B cell (primary cell): ENCODE measurements at regions of chr6 and their contacts with region 1.

Region 1: DNA sequence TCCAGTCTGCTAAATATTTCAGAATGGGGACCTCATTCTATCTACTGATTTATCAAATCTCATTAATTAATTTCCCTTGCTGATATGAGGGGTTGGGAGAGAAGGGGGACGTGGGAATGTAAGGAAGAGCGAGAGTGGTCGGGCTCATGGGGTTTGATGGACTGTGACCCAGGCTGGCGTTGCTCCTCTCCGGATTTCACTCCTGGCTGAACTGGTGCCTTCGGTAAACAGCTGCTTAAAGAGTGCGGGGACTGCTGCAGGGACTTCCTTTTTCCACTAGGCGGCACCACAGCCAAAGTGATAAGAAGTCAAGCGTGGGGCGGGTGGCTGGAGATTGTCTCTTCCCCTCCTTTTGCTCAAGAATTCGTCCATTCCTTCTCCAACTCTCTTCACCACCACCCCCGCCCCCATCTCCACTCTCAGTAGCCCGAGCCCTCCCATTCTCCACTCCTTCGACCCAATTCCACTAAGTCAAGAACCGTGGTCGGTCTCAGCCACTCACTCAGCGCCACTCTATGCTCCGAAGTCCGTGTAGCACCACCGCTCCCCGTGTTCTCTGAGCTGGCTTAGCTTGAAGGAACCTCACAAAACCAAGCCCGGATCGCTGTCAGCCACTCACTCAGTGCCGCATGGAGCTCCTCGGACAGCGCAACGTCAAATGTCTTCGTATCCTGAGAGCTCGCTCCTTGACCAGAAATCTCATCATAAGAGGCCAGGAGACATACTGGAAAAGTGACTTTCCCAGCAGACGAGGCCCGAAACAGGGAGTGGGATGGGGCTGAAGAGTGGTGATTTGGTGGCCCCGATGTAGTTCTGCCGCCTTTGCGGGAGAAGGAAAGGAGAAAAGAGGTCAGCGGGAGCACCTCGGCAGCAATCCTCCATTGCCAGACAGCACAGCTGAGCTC is 9.7 kb downstream of the TRIM31 start:
- DNase-seq: peak; percentile 92
- ATAC-seq: peak; percentile 82
- H3K4me3 ChIP-seq: peak overlapping the region in 4 of 5 experiments; percentile 44 to 64 (median 54)
- H3K4me3 Mint-ChIP-seq: peak overlapping the region; percentile 91
- H3K27ac ChIP-seq: peak overlapping the region in 1 of 2 donors; percentile 22
- H3K27ac Mint-ChIP-seq: peak overlapping the region; percentile 59
- H3K4me1 ChIP-seq: peaks cover 37 to 40% of the 10 kb centered on the region in 2 donors
- H3K4me1 Mint-ChIP-seq: peaks cover 32% of the 10 kb centered on the region
- H3K27me3 ChIP-seq: peaks cover 3 to 65% (median 51%) of the 10 kb centered on the region in 4 experiments
- H3K27me3 Mint-ChIP-seq: peaks cover 52% of the 10 kb centered on the region
- CTCF ChIP-seq: peak; percentile 92

Region 2: GRCh38 chr6:29847871-29848630 is 255.2 kb before region 1 on chr6:
- CTCF ChIA-PET with region 1: interaction called, 14 read pairs
- POLR2A ChIA-PET with region 1: no interaction called
- intact Hi-C with region 1: no loop called
- DNase-seq: peak; percentile 85
- ATAC-seq: peak; percentile 85
- H3K4me3 ChIP-seq: no peak overlapping the region
- H3K4me3 Mint-ChIP-seq: no peak overlapping the region
- H3K27ac ChIP-seq: no peak overlapping the region
- H3K27ac Mint-ChIP-seq: no peak overlapping the region
- H3K4me1 ChIP-seq: peaks cover 6 to 11% of the 10 kb centered on the region in 2 donors
- H3K4me1 Mint-ChIP-seq: peaks cover 9% of the 10 kb centered on the region
- H3K27me3 ChIP-seq: peaks cover 0 to 63% (median 45%) of the 10 kb centered on the region in 4 experiments
- H3K27me3 Mint-ChIP-seq: peaks cover 66% of the 10 kb centered on the region
- CTCF ChIP-seq: peak; percentile 92

Region 3: DNA sequence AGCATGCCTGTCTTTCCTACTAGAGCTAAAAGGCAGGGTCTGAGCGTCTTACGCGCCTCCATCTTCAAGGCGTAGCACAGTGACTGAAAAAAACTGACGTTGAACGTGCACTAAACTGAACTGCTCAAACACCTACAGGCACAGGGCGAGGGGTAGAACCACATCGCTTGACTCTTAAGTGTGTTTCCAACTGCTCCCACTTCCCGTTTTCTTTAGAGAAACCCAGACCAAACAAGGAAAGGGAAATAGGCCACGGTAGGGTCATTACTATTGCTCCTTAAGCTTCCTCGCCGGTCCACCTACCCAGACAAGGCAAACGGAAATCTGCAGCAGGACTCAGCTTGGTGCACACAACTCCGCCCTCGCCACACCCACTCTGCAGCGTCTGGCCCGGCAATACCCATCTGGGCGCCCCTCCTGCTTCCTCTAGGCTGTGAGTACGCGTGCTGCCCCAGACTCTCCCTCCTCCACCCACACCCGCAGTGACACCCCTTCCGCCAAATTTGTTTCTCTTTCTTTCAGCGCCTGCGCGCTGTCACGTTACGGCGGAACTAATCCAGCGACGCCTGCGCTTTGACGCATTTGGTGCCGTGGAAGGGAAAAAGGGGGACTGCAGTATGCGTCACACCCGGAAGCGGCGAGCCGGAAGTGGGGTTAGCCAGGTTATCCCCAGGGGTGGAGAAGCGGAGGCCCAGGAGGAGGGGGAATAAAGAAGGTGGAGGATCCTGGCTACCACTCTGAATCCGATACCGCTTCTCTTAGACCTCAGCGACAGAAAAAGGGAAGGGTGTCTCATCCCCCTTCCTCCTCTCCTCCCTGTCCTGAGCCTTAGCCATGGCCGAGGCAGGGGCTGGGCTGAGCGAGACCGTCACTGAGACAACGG is 36.4 kb before region 1 on chr6 and contains the start of gene PPP1R11:
- CTCF ChIA-PET with region 1: interaction called, 10 read pairs
- POLR2A ChIA-PET with region 1: interaction called, 10 read pairs
- intact Hi-C with region 1: loop called (anchors 1 kb)
- DNase-seq: peak; percentile 100
- ATAC-seq: peak; percentile 97
- H3K4me3 ChIP-seq: peak within 1 kb of the TSS; percentile 80 to 95 (median 85)
- H3K4me3 Mint-ChIP-seq: peak within 1 kb of the TSS; percentile 93
- H3K27ac ChIP-seq: peak within 1 kb of the TSS; percentile 93 to 97
- H3K27ac Mint-ChIP-seq: peak within 1 kb of the TSS; percentile 99
- H3K4me1 ChIP-seq: peaks cover 42 to 45% of the 10 kb centered on the region in 2 donors
- H3K4me1 Mint-ChIP-seq: peaks cover 51% of the 10 kb centered on the region
- H3K27me3 ChIP-seq: peaks cover 0 to 20% (median 9%) of the 10 kb centered on the region in 4 experiments
- H3K27me3 Mint-ChIP-seq: peaks cover 17% of the 10 kb centered on the region
- CTCF ChIP-seq: no peak
- total RNA-seq, gene PPP1R11: 44.8 and 49.5 TPM in 2 replicates

Region 4: GRCh38 chr6:30077218-30077617 is 26.0 kb before region 1 on chr6:
- CTCF ChIA-PET with region 1: no interaction called
- POLR2A ChIA-PET with region 1: no interaction called
- intact Hi-C with region 1: no loop called
- DNase-seq: no peak
- ATAC-seq: no peak
- H3K4me3 ChIP-seq: no peak overlapping the region
- H3K4me3 Mint-ChIP-seq: no peak overlapping the region
- H3K27ac ChIP-seq: no peak overlapping the region
- H3K27ac Mint-ChIP-seq: no peak overlapping the region
- H3K4me1 ChIP-seq: peaks cover 19 to 20% of the 10 kb centered on the region in 2 donors
- H3K4me1 Mint-ChIP-seq: peaks cover 19% of the 10 kb centered on the region
- H3K27me3 ChIP-seq: peaks cover 0 to 57% (median 40%) of the 10 kb centered on the region in 4 experiments
- H3K27me3 Mint-ChIP-seq: peaks cover 70% of the 10 kb centered on the region
- CTCF ChIP-seq: no peak

Region 5: DNA sequence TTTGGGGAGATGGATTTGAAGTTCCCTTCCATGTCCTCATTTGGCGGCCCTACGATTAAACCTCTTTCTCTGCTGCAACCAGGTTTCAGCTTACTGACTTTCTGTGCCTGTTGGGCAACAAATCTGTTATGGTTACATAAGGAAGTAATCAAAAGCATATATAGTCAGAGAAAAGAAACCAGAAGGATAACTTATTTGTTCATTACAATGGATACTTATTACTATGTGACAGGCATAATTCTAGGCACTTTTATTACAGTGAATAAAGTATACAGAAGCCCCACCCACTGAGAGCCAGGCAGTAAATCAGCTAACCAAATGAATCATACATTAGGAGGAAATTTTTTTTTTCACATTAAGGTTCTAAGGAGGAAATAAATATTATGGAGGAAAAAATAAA is 19.3 kb after region 1 on chr6:
- CTCF ChIA-PET with region 1: interaction called, 22 read pairs
- POLR2A ChIA-PET with region 1: no interaction called
- intact Hi-C with region 1: no loop called
- DNase-seq: no peak
- ATAC-seq: no peak
- H3K4me3 ChIP-seq: no peak overlapping the region
- H3K4me3 Mint-ChIP-seq: no peak overlapping the region
- H3K27ac ChIP-seq: no peak overlapping the region
- H3K27ac Mint-ChIP-seq: no peak overlapping the region
- H3K4me1 ChIP-seq: peaks cover 2% of the 10 kb centered on the region in 2 donors
- H3K4me1 Mint-ChIP-seq: peaks cover 4% of the 10 kb centered on the region
- H3K27me3 ChIP-seq: peaks cover 0 to 19% (median 7%) of the 10 kb centered on the region in 4 experiments
- H3K27me3 Mint-ChIP-seq: peaks cover 47% of the 10 kb centered on the region
- CTCF ChIP-seq: no peak

Region 6: DNA sequence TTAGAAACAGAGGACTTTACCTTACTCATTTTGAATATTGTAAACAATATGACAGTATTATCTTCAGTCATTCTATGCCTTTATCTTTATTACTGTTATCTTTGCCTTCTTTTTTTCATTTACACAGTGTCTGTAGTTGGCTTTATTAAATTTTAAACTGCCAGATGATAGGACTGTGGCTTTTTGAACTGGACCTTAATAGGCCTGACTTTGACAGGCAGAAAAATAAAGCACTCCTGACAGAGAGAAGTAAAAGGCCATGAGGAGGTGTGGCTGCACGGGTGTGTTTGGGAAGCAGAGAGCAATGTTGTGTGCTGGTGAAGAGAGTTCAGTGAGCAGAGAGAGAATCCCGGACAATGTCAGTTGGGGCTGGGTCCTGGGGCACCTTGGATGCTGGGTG is 40.6 kb after region 1 on chr6:
- CTCF ChIA-PET with region 1: interaction called, 12 read pairs
- POLR2A ChIA-PET with region 1: no interaction called
- intact Hi-C with region 1: no loop called
- DNase-seq: no peak
- ATAC-seq: no peak
- H3K4me3 ChIP-seq: no peak overlapping the region
- H3K4me3 Mint-ChIP-seq: no peak overlapping the region
- H3K27ac ChIP-seq: no peak overlapping the region
- H3K27ac Mint-ChIP-seq: no peak overlapping the region
- H3K4me1 ChIP-seq: no peaks in the 10 kb centered on the region
- H3K4me1 Mint-ChIP-seq: no peaks in the 10 kb centered on the region
- H3K27me3 ChIP-seq: peaks cover 0 to 30% (median 7%) of the 10 kb centered on the region in 4 experiments
- H3K27me3 Mint-ChIP-seq: peaks cover 46% of the 10 kb centered on the region
- CTCF ChIP-seq: no peak

Region 7: DNA sequence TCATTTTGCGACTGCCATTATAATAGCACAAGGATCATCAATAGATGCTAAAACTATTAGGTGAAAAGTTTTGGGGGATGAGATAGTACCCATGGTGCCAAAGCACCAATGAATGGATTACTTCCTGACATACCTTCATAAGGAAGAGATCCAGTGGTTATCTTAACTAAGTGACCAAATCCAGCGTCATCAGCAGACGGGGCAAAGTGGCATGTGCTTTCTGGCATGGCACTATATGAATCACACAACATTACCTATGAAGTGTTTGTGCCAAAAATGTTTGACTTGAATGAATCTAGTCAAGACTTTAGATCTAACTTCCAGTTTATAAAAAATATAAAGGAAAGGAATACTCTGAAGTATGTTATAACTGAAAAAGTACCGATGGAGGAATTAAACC is 99.1 kb after region 1 on chr6:
- CTCF ChIA-PET with region 1: no interaction called
- POLR2A ChIA-PET with region 1: no interaction called
- intact Hi-C with region 1: no loop called
- DNase-seq: no peak
- ATAC-seq: no peak
- H3K4me3 ChIP-seq: no peak overlapping the region
- H3K4me3 Mint-ChIP-seq: no peak overlapping the region
- H3K27ac ChIP-seq: peak overlapping the region in 1 of 2 donors; percentile 20
- H3K27ac Mint-ChIP-seq: peak overlapping the region; percentile 61
- H3K4me1 ChIP-seq: peaks cover 36 to 46% of the 10 kb centered on the region in 2 donors
- H3K4me1 Mint-ChIP-seq: peaks cover 53% of the 10 kb centered on the region
- H3K27me3 ChIP-seq: no peaks in the 10 kb centered on the region
- H3K27me3 Mint-ChIP-seq: no peaks in the 10 kb centered on the region
- CTCF ChIP-seq: no peak

Region 8: GRCh38 chr6:30212865-30213666 is 109.8 kb after region 1 on chr6 and contains the start of gene TRIM26:
- CTCF ChIA-PET with region 1: interaction called, 8 read pairs
- POLR2A ChIA-PET with region 1: no interaction called
- intact Hi-C with region 1: loop called (anchors 1 kb)
- DNase-seq: peak; percentile 99
- ATAC-seq: peak; percentile 87
- H3K4me3 ChIP-seq: peak within 1 kb of the TSS; percentile 93 to 100 (median 98)
- H3K4me3 Mint-ChIP-seq: peak within 1 kb of the TSS; percentile 90
- H3K27ac ChIP-seq: peak within 1 kb of the TSS; percentile 98 to 100
- H3K27ac Mint-ChIP-seq: peak within 1 kb of the TSS; percentile 100
- H3K4me1 ChIP-seq: peaks cover 40 to 47% of the 10 kb centered on the region in 2 donors
- H3K4me1 Mint-ChIP-seq: peaks cover 59% of the 10 kb centered on the region
- H3K27me3 ChIP-seq: no peaks in the 10 kb centered on the region
- H3K27me3 Mint-ChIP-seq: no peaks in the 10 kb centered on the region
- CTCF ChIP-seq: no peak
- total RNA-seq, gene TRIM26: 65.3 and 73.2 TPM in 2 replicates

Region 9: GRCh38 chr6:30326526-30327260 is 223.5 kb after region 1 on chr6 and contains the start of gene TRIM39:
- CTCF ChIA-PET with region 1: interaction called, 5 read pairs
- POLR2A ChIA-PET with region 1: no interaction called
- intact Hi-C with region 1: loop called (anchors 10 kb)
- DNase-seq: peak; percentile 96
- ATAC-seq: peak; percentile 69
- H3K4me3 ChIP-seq: peak within 1 kb of the TSS; percentile 72 to 97 (median 90)
- H3K4me3 Mint-ChIP-seq: peak within 1 kb of the TSS; percentile 99
- H3K27ac ChIP-seq: peak within 1 kb of the TSS; percentile 98 to 99
- H3K27ac Mint-ChIP-seq: peak within 1 kb of the TSS; percentile 99
- H3K4me1 ChIP-seq: peaks cover 21 to 31% of the 10 kb centered on the region in 2 donors
- H3K4me1 Mint-ChIP-seq: peaks cover 52% of the 10 kb centered on the region
- H3K27me3 ChIP-seq: no peaks in the 10 kb centered on the region
- H3K27me3 Mint-ChIP-seq: no peaks in the 10 kb centered on the region
- CTCF ChIP-seq: no peak
- total RNA-seq, gene TRIM39: 28.2 and 31.4 TPM in 2 replicates